ENCODE measurements at regions of chr22 and their contacts with region 1.

Region 1: DNA sequence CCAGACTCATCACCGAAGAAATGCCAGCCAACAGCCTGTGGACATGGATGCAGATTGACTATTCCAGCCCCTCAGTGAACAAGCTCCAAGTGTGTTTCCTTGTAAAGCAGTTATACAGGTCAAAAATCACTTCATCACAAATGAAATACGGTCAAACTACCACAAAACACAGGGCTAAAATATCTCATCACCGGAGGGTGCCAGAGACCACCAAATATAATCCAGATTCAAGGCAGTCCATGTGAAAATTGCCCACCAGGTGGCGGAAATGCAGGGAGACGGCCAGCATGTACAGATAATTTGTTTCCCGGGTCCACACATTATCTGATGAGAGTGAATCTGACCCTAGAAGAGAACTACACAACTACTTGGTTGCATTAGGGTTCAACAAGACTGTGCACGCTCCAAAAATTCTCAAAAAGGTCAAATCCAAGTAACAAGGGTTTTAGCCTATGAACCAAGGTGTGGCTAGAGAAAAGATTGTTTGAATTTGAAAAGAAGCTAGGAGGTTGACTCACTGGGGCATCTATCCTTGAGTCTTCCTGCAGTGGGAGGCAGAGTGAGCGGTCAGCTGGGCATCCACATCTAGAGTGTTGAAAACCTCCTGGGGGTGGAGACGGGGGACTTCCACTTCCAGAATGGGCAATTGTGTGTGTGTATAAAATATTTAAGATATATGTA is 71.7 kb downstream of the IGLL5 start:
- DNase-seq: peak; percentile 56
- ATAC-seq: peak; percentile 66
- H3K4me3 ChIP-seq: no peak overlapping the region
- H3K27ac ChIP-seq: no peak overlapping the region
- H3K4me1 ChIP-seq: peaks cover 11% of the 10 kb centered on the region
- H3K27me3 ChIP-seq: no peaks in the 10 kb centered on the region
- CTCF ChIP-seq: peak; percentile 81 to 100 (median 95); a peak in 5 of 6 replicates
- EP300 ChIP-seq: no peak
- POLR2A ChIP-seq: no peak
- RAD21 ChIP-seq: peak; percentile 100

Region 2: DNA sequence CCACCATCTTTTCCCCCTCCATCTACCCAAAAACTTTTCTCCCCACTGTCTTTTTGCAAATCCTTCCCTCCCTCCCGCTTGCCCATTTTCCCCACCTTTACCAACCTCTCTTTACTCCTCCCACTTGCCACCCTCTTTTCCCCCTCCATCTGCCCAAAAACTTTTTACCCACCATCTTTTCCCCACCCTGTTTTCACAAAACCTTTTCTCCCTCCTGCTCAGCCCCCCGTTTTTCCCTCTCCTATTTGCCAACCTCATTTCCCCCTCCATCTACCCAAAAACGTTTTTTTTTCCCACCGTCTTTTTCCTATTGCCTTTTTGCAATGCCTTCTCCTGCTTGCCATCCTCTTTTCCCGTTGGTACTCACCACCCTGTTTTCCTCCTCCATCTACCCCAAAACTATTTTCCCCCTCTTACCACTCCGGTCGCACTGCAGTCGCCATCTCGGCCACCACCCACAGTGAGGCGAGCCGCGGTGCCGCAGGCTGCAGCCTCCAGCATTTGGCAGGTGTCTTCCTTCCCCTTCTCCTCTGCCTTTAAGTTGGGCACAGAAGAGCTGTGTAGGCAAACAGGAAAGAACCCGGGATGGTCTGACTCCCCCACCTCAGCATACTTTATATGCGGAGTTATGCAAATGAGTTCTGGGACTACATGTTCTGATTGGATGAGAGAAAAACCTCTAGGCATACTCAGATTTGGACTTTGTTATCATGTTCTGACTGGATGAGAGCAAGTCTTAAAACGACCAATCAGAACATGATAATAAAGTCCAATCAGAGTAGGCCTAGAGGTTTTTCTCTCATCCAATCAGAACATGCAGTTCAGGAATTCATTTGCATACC is 835.9 kb before region 1 on chr22:
- CTCF ChIA-PET with region 1: interaction called, 7 read pairs
- POLR2A ChIA-PET with region 1: no interaction called
- RAD21 ChIA-PET with region 1: interaction called, 13 read pairs
- SMC1A ChIA-PET with region 1: interaction called, 6 read pairs
- in situ Hi-C with region 1: no loop called
- intact Hi-C with region 1: no loop called
- DNase-seq: no peak
- ATAC-seq: no peak
- H3K4me3 ChIP-seq: no peak overlapping the region
- H3K27ac ChIP-seq: no peak overlapping the region
- H3K4me1 ChIP-seq: no peaks in the 10 kb centered on the region
- H3K27me3 ChIP-seq: no peaks in the 10 kb centered on the region
- CTCF ChIP-seq: no peak
- EP300 ChIP-seq: no peak
- POLR2A ChIP-seq: no peak
- RAD21 ChIP-seq: no peak

Region 3: GRCh38 chr22:22770280-22770871 is 188.9 kb before region 1 on chr22:
- CTCF ChIA-PET with region 1: interaction called, 80 read pairs
- POLR2A ChIA-PET with region 1: interaction called, 3 read pairs
- RAD21 ChIA-PET with region 1: interaction called, 18 read pairs
- SMC1A ChIA-PET with region 1: interaction called, 11 read pairs
- in situ Hi-C with region 1: no loop called
- intact Hi-C with region 1: no loop called
- DNase-seq: no peak
- ATAC-seq: peak; percentile 58
- H3K4me3 ChIP-seq: no peak overlapping the region
- H3K27ac ChIP-seq: no peak overlapping the region
- H3K4me1 ChIP-seq: no peaks in the 10 kb centered on the region
- H3K27me3 ChIP-seq: no peaks in the 10 kb centered on the region
- CTCF ChIP-seq: peak; percentile 29 to 61 (median 43); a peak in 4 of 6 replicates
- EP300 ChIP-seq: no peak
- POLR2A ChIP-seq: no peak
- RAD21 ChIP-seq: no peak

Region 4: DNA sequence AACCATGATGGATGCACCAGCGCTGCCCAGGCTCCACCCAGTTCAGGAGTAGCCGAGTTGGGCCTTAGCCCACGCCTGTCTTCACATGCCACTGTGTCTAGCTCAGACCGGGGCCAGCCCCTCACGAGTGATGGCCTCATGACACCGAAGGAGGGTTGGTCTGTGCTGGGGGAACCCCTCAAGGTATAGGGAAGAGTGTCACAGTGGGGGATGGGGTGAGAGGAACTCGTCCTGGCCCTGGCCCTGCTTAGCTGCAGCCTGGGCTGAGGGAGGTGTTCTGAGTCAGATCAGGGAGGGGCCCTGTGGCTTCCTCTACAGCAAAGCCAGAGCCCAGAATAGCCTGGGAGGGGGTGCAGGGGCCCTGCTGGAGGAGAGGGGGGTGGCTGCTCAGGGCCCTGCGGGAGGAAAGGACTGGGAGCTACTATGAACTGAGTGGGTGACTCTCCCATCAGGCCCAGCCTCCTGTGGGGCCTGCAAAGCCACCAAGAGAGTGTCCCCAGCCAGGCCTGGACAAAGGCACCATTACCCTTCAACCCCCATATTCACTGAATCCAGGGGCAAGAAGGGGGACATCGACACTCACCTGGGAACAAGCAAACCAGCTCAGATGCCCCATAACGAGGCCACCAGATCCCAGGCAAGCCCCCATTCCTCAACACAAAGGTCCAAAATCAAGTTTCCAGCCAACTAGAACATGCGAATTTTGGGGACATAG is 30.5 kb before region 1 on chr22:
- CTCF ChIA-PET with region 1: interaction called, 397 read pairs
- POLR2A ChIA-PET with region 1: no interaction called
- RAD21 ChIA-PET with region 1: interaction called, 145 read pairs
- SMC1A ChIA-PET with region 1: interaction called, 61 read pairs
- in situ Hi-C with region 1: no loop called
- intact Hi-C with region 1: no loop called
- DNase-seq: peak; percentile 99
- ATAC-seq: peak; percentile 87
- H3K4me3 ChIP-seq: peak overlapping the region; percentile 14; the same call in 1 of the 2 replicates
- H3K27ac ChIP-seq: peak overlapping the region; percentile 99
- H3K4me1 ChIP-seq: peaks cover 81% of the 10 kb centered on the region
- H3K27me3 ChIP-seq: no peaks in the 10 kb centered on the region
- CTCF ChIP-seq: no peak
- EP300 ChIP-seq: peak; percentile 86 to 89; a peak in 3 of 4 replicates
- POLR2A ChIP-seq: peak; percentile 88
- RAD21 ChIP-seq: peak; percentile 27; the same call in 1 of the 2 replicates

Region 5: DNA sequence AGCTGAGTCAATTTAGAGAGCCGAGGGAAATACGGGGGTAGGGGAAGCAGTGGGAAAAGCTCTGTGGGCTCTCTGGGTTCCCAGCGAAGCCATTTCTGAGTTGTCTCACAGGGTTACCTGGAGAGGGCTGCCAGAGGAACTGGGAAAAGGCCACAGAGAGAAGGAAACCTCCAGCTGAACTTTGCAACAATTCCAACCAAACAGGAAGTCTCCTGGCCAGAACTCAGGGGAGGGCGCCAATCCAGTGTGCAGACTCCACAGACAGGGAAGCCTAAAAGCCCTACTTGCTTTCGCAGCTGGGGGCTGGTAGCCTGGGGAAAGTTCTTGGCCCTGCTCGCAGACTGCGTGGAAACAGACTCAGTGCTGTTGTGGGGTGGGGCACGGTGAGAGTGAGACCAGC is 88.0 kb after region 1 on chr22:
- CTCF ChIA-PET with region 1: interaction called, 12 read pairs
- POLR2A ChIA-PET with region 1: no interaction called
- RAD21 ChIA-PET with region 1: interaction called, 3 read pairs
- SMC1A ChIA-PET with region 1: interaction called, 12 read pairs
- in situ Hi-C with region 1: no loop called
- intact Hi-C with region 1: no loop called
- DNase-seq: no peak
- ATAC-seq: no peak
- H3K4me3 ChIP-seq: no peak overlapping the region
- H3K27ac ChIP-seq: no peak overlapping the region
- H3K4me1 ChIP-seq: no peaks in the 10 kb centered on the region
- H3K27me3 ChIP-seq: no peaks in the 10 kb centered on the region
- CTCF ChIP-seq: no peak
- EP300 ChIP-seq: no peak
- POLR2A ChIP-seq: no peak
- RAD21 ChIP-seq: no peak

Region 6: GRCh38 chr22:23128269-23129108 is 169.2 kb after region 1 on chr22:
- CTCF ChIA-PET with region 1: interaction called, 539 read pairs
- POLR2A ChIA-PET with region 1: interaction called, 17 read pairs
- RAD21 ChIA-PET with region 1: interaction called, 281 read pairs
- SMC1A ChIA-PET with region 1: interaction called, 277 read pairs
- in situ Hi-C with region 1: loop called (anchors 5 kb)
- intact Hi-C with region 1: loop called (anchors 1 kb)
- DNase-seq: no peak
- ATAC-seq: peak; percentile 97
- H3K4me3 ChIP-seq: no peak overlapping the region
- H3K27ac ChIP-seq: no peak overlapping the region
- H3K4me1 ChIP-seq: no peaks in the 10 kb centered on the region
- H3K27me3 ChIP-seq: no peaks in the 10 kb centered on the region
- CTCF ChIP-seq: peak; percentile 80 to 90 (median 82)
- EP300 ChIP-seq: no peak
- POLR2A ChIP-seq: no peak
- RAD21 ChIP-seq: peak; percentile 95

Measured in GM12878 (cell line).